ENCODE measurements at regions of chr12 and their contacts with region 1.

Region 1: DNA sequence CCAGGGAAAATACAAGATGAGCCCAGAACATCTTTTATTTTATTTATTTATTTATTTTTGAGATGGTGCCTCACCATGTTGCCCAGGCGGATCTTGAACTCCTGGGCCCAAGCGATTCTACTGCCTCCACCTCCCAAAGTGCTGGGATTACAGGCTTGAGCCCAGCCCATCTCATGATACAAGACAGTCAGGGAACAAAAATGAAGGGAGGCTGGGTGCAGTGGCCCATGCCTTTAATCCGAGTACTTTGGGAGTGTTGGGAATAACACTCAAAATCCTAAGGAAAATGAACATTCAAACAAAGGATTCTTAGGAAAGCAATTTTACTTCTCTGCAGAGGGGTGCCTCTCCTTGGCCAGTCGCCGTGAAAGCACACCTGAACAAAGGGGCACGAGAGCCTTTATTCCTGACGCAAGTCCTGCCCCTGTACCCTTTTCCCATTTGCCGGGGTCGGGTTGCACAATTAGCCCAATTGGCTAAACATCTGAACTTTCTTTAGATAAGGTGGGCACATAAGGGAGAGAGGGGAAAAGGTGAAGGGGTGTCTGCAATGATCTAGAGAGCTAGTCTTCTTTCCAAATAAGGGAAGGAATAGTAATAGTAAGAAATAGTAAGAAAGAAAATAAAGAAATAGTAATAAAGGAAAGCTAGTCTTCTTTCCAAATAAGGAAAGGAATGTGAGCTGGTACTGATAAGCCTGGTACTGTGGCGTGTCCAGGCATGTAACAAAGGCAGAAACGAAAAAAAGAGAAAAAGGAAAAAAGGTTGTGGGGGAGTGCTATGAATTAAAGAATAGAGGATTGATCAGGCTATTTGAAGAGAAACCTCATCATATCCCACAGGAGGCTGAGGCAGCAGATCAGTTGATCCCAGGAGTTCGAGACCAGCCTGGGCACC is 13.4 kb downstream of the NCAPD2 start:
- DNase-seq: no peak
- ATAC-seq: no peak
- H3K4me3 ChIP-seq: no peak overlapping the region
- H3K4me3 Mint-ChIP-seq: no peak overlapping the region
- H3K27ac ChIP-seq: no peak overlapping the region
- H3K27ac Mint-ChIP-seq: no peak overlapping the region
- H3K4me1 ChIP-seq: no peaks in the 10 kb centered on the region
- H3K4me1 Mint-ChIP-seq: peaks cover 5 to 7% (median 5%) of the 10 kb centered on the region in 3 donors
- H3K27me3 ChIP-seq: no peaks in the 10 kb centered on the region
- H3K27me3 Mint-ChIP-seq: no peaks in the 10 kb centered on the region

Region 2: GRCh38 chr12:6430124-6430989 is 77.0 kb before region 1 on chr12:
- CTCF ChIA-PET with region 1: interaction called in 1 of 2 experiments, 13 read pairs
- POLR2A ChIA-PET with region 1: no interaction called
- DNase-seq: peak in 1 of 35 experiments; percentile 35
- ATAC-seq: no peak
- H3K4me3 ChIP-seq: no peak overlapping the region
- H3K4me3 Mint-ChIP-seq: peak overlapping the region in 2 of 3 donors; percentile 39 to 42
- H3K27ac ChIP-seq: no peak overlapping the region
- H3K27ac Mint-ChIP-seq: peak overlapping the region; percentile 57 to 77
- H3K4me1 ChIP-seq: peaks cover 43 to 73% of the 10 kb centered on the region in 2 experiments
- H3K4me1 Mint-ChIP-seq: peaks cover 62 to 80% (median 71%) of the 10 kb centered on the region in 3 donors
- H3K27me3 ChIP-seq: no peaks in the 10 kb centered on the region
- H3K27me3 Mint-ChIP-seq: no peaks in the 10 kb centered on the region

Region 3: GRCh38 chr12:6471989-6472360 is 35.4 kb before region 1 on chr12:
- CTCF ChIA-PET with region 1: no interaction called
- POLR2A ChIA-PET with region 1: no interaction called
- DNase-seq: no peak
- ATAC-seq: no peak
- H3K4me3 ChIP-seq: no peak overlapping the region
- H3K4me3 Mint-ChIP-seq: peak overlapping the region in 2 of 3 donors; percentile 6 to 28
- H3K27ac ChIP-seq: no peak overlapping the region
- H3K27ac Mint-ChIP-seq: peak overlapping the region in 1 of 2 donors; percentile 96
- H3K4me1 ChIP-seq: peaks cover 16 to 27% of the 10 kb centered on the region in 2 experiments
- H3K4me1 Mint-ChIP-seq: peaks cover 36 to 39% (median 38%) of the 10 kb centered on the region in 3 donors
- H3K27me3 ChIP-seq: no peaks in the 10 kb centered on the region
- H3K27me3 Mint-ChIP-seq: no peaks in the 10 kb centered on the region

Region 4: GRCh38 chr12:6937481-6938297 is 430.3 kb after region 1 on chr12:
- CTCF ChIA-PET with region 1: no interaction called
- POLR2A ChIA-PET with region 1: no interaction called
- DNase-seq: peak; percentile 80 to 98 (median 92)
- ATAC-seq: peak; percentile 93 to 95 (median 94)
- H3K4me3 ChIP-seq: peak overlapping the region; percentile 62 to 72
- H3K4me3 Mint-ChIP-seq: peak overlapping the region; percentile 76 to 84 (median 83)
- H3K27ac ChIP-seq: peak overlapping the region; percentile 94
- H3K27ac Mint-ChIP-seq: peak overlapping the region; percentile 91 to 93
- H3K4me1 ChIP-seq: peaks cover 17 to 48% of the 10 kb centered on the region in 2 experiments
- H3K4me1 Mint-ChIP-seq: peaks cover 40 to 60% (median 46%) of the 10 kb centered on the region in 3 donors
- H3K27me3 ChIP-seq: no peaks in the 10 kb centered on the region
- H3K27me3 Mint-ChIP-seq: no peaks in the 10 kb centered on the region

Measured in T-cell (primary cell).